Psoas muscle (tissue), 8 donors: ENCODE measurements at regions of chr7 and their contacts with region 1.

Region 1: GRCh38 chr7:1044191-1045068 is at the start of gene GPR146:
- DNase-seq: peak; percentile 98
- ATAC-seq: peak; percentile 96 to 99 (median 98)
- H3K4me3 ChIP-seq: peak within 1 kb of the TSS; percentile 90
- H3K27ac ChIP-seq: peak within 1 kb of the TSS; percentile 97
- H3K4me1 ChIP-seq: peaks cover 46% of the 10 kb centered on the region
- H3K27me3 ChIP-seq: no peaks in the 10 kb centered on the region
- CTCF ChIP-seq: peak; percentile 61
- total RNA-seq, gene GPR146: 5.0 to 12.1 (median 7.5) TPM

Region 2: DNA sequence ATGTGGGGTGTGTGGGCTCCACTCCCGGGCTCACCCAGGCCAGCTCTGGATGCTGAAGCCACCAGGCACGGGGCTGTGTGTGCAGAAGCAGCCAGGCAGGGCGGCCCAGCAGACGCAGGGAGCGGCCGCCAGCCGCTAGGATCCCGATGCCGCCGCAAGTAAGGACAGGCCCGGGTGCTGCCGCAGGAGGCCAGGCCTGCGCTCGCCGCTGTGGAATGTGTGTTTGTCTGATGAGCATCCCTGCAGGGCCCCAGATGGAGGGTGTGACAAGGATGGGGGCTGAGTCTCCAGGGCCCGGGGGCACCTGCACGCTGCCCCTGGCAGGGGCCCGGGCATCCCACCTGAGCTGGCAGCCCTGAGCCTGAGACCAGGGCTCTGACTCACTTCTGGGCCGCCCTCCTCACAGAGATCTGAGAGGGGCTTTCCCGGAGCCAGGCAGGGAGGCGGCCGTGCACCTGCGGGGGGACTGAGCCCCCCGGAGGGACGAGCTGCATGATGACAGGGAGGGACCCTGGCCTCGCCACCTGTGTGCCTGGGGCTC is 652.9 kb before region 1 on chr7:
- intact Hi-C with region 1: no loop called
- DNase-seq: peak in 1 of 2 donors; percentile 40
- ATAC-seq: no peak
- H3K4me3 ChIP-seq: no peak overlapping the region
- H3K27ac ChIP-seq: no peak overlapping the region
- H3K4me1 ChIP-seq: no peaks in the 10 kb centered on the region
- H3K27me3 ChIP-seq: peaks cover 0 to 4% (median under 1%) of the 10 kb centered on the region in 3 donors
- CTCF ChIP-seq: no peak

Region 3: DNA sequence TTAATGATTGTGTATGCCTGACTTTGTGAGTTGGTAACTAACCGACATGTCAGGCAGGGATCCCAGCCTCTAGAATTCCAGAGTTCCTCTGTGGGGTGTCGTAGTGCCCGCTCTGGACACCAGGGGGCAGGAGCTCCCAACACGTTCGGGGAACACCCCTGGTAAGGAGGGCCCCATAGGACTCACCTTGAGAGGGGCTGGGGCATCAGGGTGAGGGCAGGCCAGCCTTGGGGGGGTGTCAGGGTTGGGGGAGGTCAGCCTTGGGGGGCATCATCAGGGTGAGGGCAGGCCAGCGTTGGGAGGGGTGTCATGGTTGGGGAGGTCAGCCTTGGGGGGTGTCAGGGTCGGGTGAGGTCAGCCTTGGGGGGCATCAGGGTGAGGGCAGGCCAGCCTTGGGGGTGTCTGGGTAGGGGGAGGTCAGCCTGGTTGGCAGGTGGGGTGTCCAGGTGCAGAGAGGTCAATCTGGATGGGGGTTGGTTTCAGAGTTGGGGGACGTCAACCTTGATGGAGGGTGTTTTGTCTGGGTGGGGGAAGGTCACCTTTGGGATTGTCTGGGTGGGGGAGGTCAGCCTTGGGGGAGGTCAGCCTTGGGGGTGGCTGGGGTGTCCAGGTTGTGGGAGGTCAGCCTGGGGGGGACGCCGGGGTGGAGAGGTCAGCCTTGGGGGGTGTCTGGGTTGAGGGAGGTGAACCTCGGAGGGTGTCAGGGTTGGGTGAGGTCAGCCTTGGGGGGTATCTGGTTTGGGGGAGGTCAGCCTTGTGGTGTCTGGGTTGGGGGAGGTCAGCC is 257.8 kb before region 1 on chr7:
- intact Hi-C with region 1: no loop called
- DNase-seq: peak; percentile 78 to 87
- ATAC-seq: peak; percentile 89 to 94 (median 92)
- H3K4me3 ChIP-seq: no peak overlapping the region
- H3K27ac ChIP-seq: no peak overlapping the region
- H3K4me1 ChIP-seq: peaks cover 5% of the 10 kb centered on the region
- H3K27me3 ChIP-seq: no peaks in the 10 kb centered on the region
- CTCF ChIP-seq: peak; percentile 74

Region 4: GRCh38 chr7:1028031-1028770 is 16.2 kb before region 1 on chr7:
- intact Hi-C with region 1: loop called in 1 of 2 experiments (anchors 2 kb)
- DNase-seq: peak; percentile 93 to 96
- ATAC-seq: peak; percentile 92 to 95 (median 94)
- H3K4me3 ChIP-seq: peak overlapping the region; percentile 73
- H3K27ac ChIP-seq: peak overlapping the region; percentile 81
- H3K4me1 ChIP-seq: peaks cover 32% of the 10 kb centered on the region
- H3K27me3 ChIP-seq: no peaks in the 10 kb centered on the region
- CTCF ChIP-seq: no peak

Region 5: GRCh38 chr7:1144269-1144771 is 99.9 kb after region 1 on chr7:
- intact Hi-C with region 1: no loop called
- DNase-seq: peak in 1 of 2 donors; percentile 50
- ATAC-seq: peak; percentile 35 to 68 (median 60)
- H3K4me3 ChIP-seq: no peak overlapping the region
- H3K27ac ChIP-seq: no peak overlapping the region
- H3K4me1 ChIP-seq: no peaks in the 10 kb centered on the region
- H3K27me3 ChIP-seq: no peaks in the 10 kb centered on the region
- CTCF ChIP-seq: peak; percentile 31

Region 6: DNA sequence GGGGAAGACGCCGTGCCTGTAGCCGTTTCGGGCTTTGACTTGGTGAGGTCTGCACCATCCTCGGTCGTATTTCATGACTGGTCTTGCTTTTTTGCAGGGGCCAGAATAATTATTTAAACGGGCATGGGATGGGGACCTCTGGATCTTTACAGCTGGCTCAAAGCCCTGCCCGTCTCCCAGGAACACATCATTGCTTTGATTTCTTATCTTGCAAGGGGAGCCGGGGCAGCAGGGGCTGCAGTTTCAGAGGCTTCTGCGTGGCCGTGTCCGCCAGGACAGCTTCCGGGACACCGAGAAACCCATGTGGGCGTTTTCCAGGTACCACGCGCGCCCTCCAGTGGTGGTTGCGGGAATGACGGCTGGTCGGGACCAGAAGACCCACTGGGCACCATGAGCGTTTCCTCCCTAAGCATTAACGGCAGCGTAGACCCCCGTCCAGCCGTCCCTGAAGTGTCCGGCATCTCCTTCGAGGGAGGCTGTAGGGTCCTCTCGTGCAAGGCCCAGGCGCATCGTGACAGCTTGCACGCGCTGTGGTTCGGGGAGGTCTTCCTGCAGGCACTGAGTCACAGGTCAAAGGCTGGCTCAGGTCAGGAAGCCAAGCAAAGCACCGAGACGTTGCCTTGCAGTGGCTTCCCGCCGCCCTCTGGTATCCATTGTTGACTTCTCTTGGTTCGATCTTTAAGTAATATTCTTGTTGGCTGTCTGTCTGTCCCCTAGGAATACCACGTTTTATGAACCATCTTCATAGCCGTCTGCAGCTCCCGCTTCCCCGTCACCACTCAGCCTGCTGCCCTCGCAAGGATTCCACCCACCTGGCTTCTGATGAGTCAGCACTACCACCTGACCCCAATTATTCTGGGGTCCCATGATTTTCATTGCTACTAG is 131.8 kb after region 1 on chr7:
- intact Hi-C with region 1: no loop called
- DNase-seq: peak; percentile 81 to 90
- ATAC-seq: peak; percentile 83 to 96 (median 89)
- H3K4me3 ChIP-seq: peak overlapping the region; percentile 53
- H3K27ac ChIP-seq: no peak overlapping the region
- H3K4me1 ChIP-seq: no peaks in the 10 kb centered on the region
- H3K27me3 ChIP-seq: peaks cover 0 to 17% (median 2%) of the 10 kb centered on the region in 3 donors
- CTCF ChIP-seq: peak; percentile 89